Activated T-helper 1 cell treated with anti-CD3 and anti-CD28 coated beads, Interleukin-12 subunit alpha, Interleukin-12 subunit beta, Interleukin-2, Interleukin-4 antibody, amounts not matched to agents 30 ng/mL and 10 ng/mL and 1 ng/mL, durations not matched to agents 14 hours and 24 hours and 36 hours (primary cell): ENCODE measurements at regions of chr2 and their contacts with region 1.

Region 1: DNA sequence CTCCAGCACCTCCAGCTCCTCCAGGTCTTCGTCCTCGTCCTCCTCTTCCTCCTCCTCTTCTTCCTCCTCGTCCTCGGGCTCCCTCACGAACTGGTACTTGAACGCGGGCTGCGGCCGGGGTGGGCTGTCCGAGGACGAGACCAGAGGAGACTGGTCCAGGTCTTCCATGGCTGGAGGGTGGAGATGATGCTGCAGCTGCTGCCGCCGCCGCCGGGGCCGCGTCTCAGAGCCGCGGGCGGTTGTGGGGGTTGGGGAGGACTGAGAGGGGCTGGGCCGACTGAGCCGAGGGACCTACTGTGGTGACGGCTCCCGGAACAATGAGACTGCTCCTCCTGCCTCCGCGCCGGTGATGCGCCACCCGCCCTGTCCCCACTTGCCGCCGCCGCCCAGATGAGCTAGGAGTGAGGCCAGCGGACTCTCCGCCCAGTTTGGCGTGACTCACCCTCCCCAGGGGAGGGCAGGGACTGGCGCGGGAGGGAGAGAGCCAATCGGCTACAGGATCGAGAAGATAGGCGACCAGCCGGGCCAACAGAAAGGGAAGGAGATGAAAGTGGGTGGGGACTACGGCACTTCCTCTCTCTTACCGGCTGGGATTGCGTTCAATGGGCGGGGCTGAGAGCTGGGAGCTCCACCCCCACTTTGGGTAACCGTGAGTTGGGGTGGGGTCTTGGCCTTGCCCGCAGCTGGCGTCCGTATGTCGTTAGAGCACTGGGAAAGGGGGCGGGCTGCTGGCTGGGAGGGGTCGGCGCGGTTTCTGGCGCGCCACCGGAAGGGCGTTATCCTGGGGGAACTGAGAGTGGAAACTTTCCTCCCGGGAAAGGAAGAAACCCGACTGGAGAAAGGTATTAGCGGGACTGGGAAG is at the start of gene RTN4:
- DNase-seq: peak; percentile 99
- H3K4me3 Mint-ChIP-seq: peak within 1 kb of the TSS; percentile 98
- H3K27ac Mint-ChIP-seq: peak within 1 kb of the TSS; percentile 98
- H3K4me1 Mint-ChIP-seq: peaks cover 69% of the 10 kb centered on the region
- H3K27me3 Mint-ChIP-seq: no peaks in the 10 kb centered on the region
- total RNA-seq, gene RTN4: 81.2 and 83.0 TPM in 2 replicates

Region 2: GRCh38 chr2:54503192-54503591 is 547.2 kb before region 1 on chr2:
- intact Hi-C with region 1: no loop called
- DNase-seq: no peak
- H3K4me3 Mint-ChIP-seq: no peak overlapping the region
- H3K27ac Mint-ChIP-seq: no peak overlapping the region
- H3K4me1 Mint-ChIP-seq: no peaks in the 10 kb centered on the region
- H3K27me3 Mint-ChIP-seq: peaks cover 6% of the 10 kb centered on the region

Region 3: DNA sequence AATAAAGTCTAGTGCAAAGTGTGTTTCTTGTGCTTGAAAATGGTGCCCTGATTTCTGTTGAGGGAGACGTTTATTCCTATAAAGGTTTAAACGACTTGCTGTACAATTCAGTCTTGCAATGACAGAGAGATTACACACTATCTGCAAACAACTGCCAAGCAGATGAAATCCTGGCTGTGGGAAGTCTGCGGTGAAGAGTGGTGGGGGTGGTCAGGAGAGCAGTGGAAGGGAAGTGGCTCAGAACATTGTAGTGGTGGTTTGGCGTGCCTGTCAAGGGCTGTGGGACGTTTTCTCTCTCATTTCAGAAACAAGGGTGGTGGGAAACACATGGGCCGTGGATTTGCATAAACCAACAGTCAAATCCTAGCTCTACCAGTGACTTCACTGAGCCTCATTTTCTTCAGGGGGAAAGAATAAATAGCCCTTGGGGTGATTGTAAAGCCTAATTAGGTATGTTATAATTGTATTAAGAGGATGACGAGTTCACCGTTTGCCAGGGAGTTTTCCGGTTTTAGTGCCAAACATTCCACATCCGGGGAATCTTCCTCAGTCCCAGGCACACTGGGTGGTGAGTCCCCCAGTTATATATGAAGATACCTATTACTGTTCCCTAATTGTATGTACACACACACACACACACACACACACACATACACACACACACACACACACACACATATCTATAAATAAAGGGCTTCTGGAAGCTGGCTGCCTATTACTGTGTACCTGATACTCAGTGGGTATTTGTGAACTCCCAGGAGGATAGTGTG is 479.3 kb before region 1 on chr2:
- intact Hi-C with region 1: loop called (anchors 2 kb)
- DNase-seq: peak; percentile 84
- H3K4me3 Mint-ChIP-seq: peak overlapping the region; percentile 70
- H3K27ac Mint-ChIP-seq: peak overlapping the region; percentile 92
- H3K4me1 Mint-ChIP-seq: peaks cover 91% of the 10 kb centered on the region
- H3K27me3 Mint-ChIP-seq: peaks cover 2% of the 10 kb centered on the region

Region 4: DNA sequence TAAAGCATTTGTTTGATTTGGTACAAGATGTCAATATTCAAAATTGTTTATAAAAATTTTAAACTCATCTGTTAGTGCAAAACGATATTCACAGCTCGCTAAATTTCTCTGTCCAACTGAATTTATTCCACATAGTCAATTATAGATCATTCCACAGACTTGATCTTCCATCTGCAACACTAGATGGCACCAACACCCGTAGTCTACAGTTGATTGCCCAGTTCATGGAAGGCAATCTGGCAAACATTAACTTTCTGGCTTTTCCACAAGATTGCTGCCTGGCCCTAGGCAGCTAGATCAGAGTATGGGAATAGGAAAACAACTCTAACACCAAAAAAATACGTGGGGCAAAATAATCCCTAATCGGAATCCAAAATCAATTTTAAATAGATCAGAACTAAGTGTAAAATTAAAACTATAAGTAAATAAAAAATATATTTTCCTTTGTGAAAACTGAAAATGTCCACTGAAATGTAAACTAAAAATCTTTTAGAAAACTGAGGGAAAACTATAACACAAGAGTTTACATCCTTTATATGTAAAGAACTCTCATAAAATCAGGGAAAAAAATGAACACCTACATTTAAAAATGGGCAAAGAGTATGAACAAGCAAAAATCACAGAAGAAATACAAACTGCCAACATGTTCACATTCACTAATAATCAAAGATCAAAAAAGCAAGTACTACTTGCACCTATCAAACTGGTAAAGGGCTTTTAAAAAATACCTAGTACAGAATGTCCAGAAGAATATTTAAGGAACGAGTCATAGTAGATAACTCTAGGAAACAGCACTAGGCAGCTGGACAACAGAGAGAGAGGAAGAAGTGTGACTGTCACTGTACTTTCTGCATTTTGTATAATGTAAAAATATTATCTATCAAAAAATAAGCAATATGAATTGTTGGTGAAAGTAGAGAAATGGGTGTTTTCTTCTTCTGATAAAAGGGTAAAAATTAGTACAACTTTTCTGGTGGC is 35.1 kb before region 1 on chr2:
- intact Hi-C with region 1: loop called (anchors 1 kb)
- DNase-seq: no peak
- H3K4me3 Mint-ChIP-seq: no peak overlapping the region
- H3K27ac Mint-ChIP-seq: no peak overlapping the region
- H3K4me1 Mint-ChIP-seq: peaks cover 22% of the 10 kb centered on the region
- H3K27me3 Mint-ChIP-seq: no peaks in the 10 kb centered on the region

Region 5: GRCh38 chr2:55223958-55224760 is 173.8 kb after region 1 on chr2:
- intact Hi-C with region 1: loop called (anchors 2 kb)
- DNase-seq: no peak
- H3K4me3 Mint-ChIP-seq: peak overlapping the region; percentile 71
- H3K27ac Mint-ChIP-seq: peak overlapping the region; percentile 67
- H3K4me1 Mint-ChIP-seq: peaks cover 46% of the 10 kb centered on the region
- H3K27me3 Mint-ChIP-seq: no peaks in the 10 kb centered on the region

Region 6: DNA sequence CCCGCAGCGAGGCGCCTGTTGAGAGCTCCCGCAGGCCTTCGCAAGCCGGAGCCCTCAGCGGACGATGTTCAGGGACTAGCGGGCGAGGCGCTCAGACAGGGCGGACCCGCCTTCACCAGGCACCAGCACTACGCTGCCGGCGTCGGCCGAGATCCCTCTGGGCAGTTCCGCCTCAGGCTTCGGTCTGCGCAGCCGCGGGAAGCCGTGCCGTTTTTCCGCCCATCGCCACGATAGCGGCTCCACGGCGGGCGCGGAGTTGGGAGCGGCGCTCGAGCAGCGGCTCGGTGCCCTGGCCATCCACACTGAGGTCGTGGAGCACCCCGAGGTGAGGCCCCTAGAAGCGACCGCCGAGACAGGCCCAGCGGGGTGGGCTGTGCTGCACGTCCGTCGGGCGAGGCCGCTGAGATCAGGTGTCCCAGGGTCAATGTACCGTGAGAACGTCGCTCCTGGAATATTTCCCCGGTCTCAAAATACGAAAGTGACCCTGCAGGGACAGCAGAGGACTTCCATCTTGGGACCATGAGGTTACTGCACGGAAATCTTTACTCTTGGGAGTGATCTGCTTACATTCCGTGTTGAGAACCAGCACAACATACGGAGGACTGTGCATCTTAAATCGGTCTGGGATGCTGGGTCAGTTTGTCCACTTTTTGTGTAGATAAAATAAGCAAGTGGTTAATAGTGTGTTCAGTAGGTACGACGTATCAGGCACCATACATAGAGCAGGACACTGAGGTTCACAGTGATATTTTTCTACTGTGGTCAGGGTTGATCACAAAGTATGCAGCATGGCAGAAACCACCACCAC is 231.9 kb after region 1 on chr2:
- intact Hi-C with region 1: loop called (anchors 2 kb)
- DNase-seq: peak; percentile 85
- H3K4me3 Mint-ChIP-seq: peak overlapping the region; percentile 89
- H3K27ac Mint-ChIP-seq: peak overlapping the region; percentile 93
- H3K4me1 Mint-ChIP-seq: peaks cover 12% of the 10 kb centered on the region
- H3K27me3 Mint-ChIP-seq: peaks cover 2% of the 10 kb centered on the region

Region 7: DNA sequence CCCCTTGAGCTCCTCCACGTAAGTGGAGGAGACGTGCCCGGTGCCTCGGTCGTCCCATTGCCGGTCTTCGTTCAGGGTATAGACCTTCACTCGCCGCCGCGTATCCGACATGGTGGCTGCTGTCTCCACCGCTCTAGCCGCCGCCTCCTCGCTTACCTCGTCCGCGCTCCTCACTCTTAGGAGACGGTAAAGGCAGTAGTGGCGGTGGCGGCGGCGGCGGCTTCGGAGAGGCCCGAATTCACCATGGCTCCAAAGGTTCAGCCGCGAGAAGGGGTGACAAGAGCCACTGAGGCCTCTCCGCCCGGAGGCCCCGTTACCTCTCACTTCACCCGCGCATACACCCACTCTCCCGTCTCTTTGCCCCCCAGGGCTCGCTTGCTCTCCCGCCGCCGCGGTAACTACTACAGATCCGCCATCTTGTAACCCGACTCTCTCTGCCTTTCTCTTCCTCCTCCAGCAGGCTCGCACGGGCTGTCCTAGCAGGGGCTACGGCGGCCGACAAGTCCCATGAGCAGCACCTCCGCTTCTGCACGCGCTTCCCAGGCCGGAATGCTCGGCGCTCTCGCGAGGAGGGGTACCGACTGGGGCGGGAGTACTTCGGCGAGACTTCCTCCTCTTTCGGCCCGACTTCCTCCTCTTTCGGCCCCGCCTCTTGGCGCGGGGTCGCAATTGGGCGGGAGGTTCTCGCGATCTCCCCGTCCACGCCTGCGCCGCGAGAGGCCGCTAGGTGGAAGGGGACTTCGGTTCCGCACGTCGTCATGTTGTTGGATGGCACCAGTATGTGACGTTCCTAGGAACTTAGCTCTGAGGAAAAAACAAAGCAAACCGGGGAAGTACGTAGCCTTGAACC is 567.0 kb after region 1 on chr2 and contains the start of gene PPP4R3B:
- intact Hi-C with region 1: loop called (anchors 1 kb)
- DNase-seq: peak; percentile 99
- H3K4me3 Mint-ChIP-seq: no peak within 1 kb of the TSS
- H3K27ac Mint-ChIP-seq: no peak within 1 kb of the TSS
- H3K4me1 Mint-ChIP-seq: peaks cover 38% of the 10 kb centered on the region
- H3K27me3 Mint-ChIP-seq: no peaks in the 10 kb centered on the region
- total RNA-seq, gene PPP4R3B: 69.8 and 74.6 TPM in 2 replicates